ENCODE measurements at regions of chr9 and their contacts with region 1.

Region 1: GRCh38 chr9:4366591-4367330 is 66.9 kb upstream of the GLIS3 start:
- DNase-seq: peak in 3 of 6 donors; percentile 24 to 66 (median 36)
- ATAC-seq: peak in 3 of 4 donors; percentile 77 to 82 (median 81)
- H3K4me3 ChIP-seq: no peak overlapping the region
- H3K27ac ChIP-seq: no peak overlapping the region
- H3K4me1 ChIP-seq: no peaks in the 10 kb centered on the region
- H3K27me3 ChIP-seq: no peaks in the 10 kb centered on the region
- CTCF ChIP-seq: peak; percentile 51 to 67 (median 61)

Region 2: DNA sequence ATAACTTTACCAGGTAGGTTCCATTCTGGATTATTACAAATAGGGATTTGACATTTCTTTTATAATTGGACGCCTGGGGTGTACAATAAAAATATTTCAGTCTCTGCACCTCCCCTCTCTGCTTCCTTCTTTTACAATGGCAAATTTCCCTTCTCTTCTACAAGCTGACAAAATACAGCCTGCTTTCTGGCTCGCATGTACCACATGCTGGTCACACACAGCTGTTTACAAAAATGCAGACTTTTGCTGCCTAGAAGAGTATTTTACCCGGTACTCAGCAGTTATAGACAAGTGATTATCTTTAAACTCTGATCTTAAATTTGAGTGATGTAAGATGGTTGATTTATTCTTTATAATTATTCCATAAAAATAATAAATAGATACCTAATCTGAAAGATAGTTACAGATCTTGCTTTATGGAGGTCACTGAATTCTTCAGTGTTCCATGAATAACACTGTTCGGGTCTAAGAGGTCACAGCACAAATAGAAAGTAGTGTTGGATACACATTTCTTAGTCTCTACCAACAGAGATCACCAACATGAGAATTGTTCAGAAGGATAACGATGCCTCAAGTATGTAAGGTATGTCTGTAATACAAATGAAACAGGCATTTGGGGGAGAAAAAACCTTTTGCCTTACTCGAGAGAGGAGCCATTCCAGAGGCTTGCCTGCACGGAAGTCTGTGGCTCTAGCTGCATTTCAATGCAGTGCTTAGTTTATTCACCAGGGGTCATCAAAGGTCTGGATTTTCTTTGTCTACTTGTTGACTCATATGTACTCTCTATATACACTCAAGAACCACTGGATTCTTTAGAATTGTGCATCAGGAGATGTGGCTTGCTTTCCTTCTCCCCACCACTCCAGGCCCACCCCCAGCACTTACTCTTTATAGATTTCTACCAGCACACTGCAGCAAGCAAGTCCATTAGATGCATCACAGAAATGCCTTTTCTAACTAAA is 634.4 kb before region 1 on chr9:
- intact Hi-C with region 1: loop called in 1 of 3 experiments (anchors 10 kb)
- DNase-seq: peak in 3 of 6 donors; percentile 26 to 64 (median 36)
- ATAC-seq: peak; percentile 93 to 100 (median 100)
- H3K4me3 ChIP-seq: peak overlapping the region in 1 of 4 donors; percentile 9
- H3K27ac ChIP-seq: peak overlapping the region in 2 of 4 donors; percentile 37 to 46
- H3K4me1 ChIP-seq: no peaks in the 10 kb centered on the region
- H3K27me3 ChIP-seq: no peaks in the 10 kb centered on the region
- CTCF ChIP-seq: peak; percentile 26 to 60 (median 58)

Region 3: GRCh38 chr9:3980771-3981170 is 386.0 kb before region 1 on chr9:
- intact Hi-C with region 1: loop called in 1 of 3 experiments (anchors 5 kb)
- DNase-seq: no peak
- ATAC-seq: peak in 3 of 4 donors; percentile 34 to 55 (median 38)
- H3K4me3 ChIP-seq: no peak overlapping the region
- H3K27ac ChIP-seq: no peak overlapping the region
- H3K4me1 ChIP-seq: no peaks in the 10 kb centered on the region
- H3K27me3 ChIP-seq: no peaks in the 10 kb centered on the region
- CTCF ChIP-seq: no peak

Region 4: DNA sequence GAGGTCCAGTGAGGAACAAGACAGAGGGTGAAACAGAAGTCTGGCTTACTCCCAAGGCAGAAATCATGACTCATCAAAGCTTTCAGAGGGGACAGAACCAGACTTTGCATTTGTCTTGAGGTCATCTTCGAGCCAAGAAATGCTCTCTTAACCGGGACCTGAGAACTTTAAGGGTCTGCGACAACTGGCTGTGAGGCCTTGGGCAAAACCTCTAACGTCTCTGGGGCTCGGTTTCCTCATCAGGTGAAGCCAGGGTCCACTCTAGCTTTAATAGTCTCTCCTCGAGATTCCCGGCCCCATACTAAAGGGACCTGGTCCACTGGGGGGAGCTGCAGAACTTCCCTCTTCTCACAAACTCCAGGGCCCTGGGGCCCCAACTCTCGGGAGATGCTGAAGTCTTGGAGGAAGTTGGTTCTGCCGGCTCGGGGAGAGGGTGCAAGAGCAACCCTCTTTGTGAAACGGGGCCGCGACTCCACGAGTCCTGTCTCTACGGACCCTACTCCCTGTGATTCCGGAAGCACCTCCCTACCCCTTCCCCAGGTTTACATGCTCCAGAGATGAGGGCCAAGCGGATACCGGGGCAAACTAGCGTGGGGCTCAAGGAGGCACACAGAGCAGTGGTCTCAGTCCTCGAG is 69.5 kb before region 1 on chr9:
- intact Hi-C with region 1: no loop called
- DNase-seq: peak; percentile 65 to 87 (median 74)
- ATAC-seq: peak; percentile 53 to 72 (median 66)
- H3K4me3 ChIP-seq: peak overlapping the region; percentile 62 to 80 (median 66)
- H3K27ac ChIP-seq: peak overlapping the region; percentile 73 to 96 (median 88)
- H3K4me1 ChIP-seq: peaks cover 0 to 8% (median 0%) of the 10 kb centered on the region in 3 donors
- H3K27me3 ChIP-seq: no peaks in the 10 kb centered on the region
- CTCF ChIP-seq: peak in 1 of 4 donors; percentile 10

Region 5: DNA sequence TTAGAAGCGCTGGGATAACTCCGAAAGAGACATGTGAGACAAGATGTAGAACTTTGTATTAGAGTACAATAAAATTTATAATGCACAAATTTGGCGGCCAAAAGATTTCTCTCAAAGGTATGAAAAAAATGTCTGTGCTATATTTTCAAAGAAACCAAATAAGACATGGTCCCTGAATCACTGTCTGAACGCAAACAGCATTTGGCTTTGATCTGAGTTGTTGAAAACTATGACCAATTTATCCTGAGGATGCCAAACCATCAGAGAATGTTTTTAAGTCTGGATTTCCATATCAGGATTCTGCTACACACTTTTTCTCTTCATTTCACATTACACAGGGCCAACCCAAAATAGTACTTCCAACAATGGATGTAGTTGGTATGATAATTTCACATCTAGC is 57.0 kb before region 1 on chr9:
- intact Hi-C with region 1: loop called in 2 of 3 experiments (anchors 5 to 10 kb)
- DNase-seq: no peak
- ATAC-seq: no peak
- H3K4me3 ChIP-seq: no peak overlapping the region
- H3K27ac ChIP-seq: no peak overlapping the region
- H3K4me1 ChIP-seq: peaks cover 0 to 21% (median 14%) of the 10 kb centered on the region in 3 donors
- H3K27me3 ChIP-seq: no peaks in the 10 kb centered on the region
- CTCF ChIP-seq: no peak

Region 6: GRCh38 chr9:4315582-4316215 is 51.1 kb before region 1 on chr9:
- intact Hi-C with region 1: loop called in 2 of 3 experiments (anchors 5 to 10 kb)
- DNase-seq: peak; percentile 64 to 91 (median 78)
- ATAC-seq: peak; percentile 91 to 99 (median 96)
- H3K4me3 ChIP-seq: no peak overlapping the region
- H3K27ac ChIP-seq: no peak overlapping the region
- H3K4me1 ChIP-seq: no peaks in the 10 kb centered on the region
- H3K27me3 ChIP-seq: no peaks in the 10 kb centered on the region
- CTCF ChIP-seq: peak; percentile 63 to 75 (median 68)

Region 7: DNA sequence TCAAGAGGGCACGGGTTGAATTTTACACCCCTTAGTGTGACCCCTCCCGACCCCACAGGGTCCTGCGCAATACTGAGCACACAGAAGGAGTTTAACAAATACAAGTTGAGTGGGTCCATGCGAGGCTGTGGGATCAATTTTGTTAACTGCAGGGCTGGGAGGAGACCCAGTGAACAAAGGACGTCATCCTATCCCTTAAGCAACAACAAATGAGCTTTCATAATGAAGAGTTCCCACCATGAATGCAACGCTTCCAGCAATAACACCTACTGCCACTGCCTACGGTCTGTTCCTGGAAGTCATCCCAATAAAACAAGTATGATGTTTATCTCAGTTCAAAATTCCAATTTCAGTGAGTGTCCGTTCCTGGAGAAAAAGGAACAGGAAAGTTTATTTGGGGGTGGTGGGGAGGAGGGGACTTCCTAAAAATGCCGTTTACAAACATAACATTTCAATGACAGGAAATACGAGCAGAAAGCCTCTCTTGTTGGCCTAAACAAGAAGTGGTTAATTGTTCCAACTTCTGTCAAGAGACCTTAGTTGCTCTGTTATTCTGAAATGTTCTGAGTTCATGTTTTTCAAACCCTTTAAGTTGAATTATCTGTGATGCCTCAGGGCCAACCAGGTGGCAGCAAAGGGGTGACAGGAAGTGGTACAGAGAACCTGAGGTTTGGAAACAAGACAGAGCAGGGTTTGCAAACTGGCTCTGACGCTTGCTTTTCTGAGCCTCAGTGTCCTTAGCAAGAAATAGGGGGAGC is 229.6 kb after region 1 on chr9:
- intact Hi-C with region 1: no loop called
- DNase-seq: no peak
- ATAC-seq: no peak
- H3K4me3 ChIP-seq: no peak overlapping the region
- H3K27ac ChIP-seq: no peak overlapping the region
- H3K4me1 ChIP-seq: no peaks in the 10 kb centered on the region
- H3K27me3 ChIP-seq: no peaks in the 10 kb centered on the region
- CTCF ChIP-seq: no peak

Measured in pancreas (tissue), 10 donors.